PC-3 (cell line): ENCODE measurements at regions of chr3 and their contacts with region 1.

Region 1: DNA sequence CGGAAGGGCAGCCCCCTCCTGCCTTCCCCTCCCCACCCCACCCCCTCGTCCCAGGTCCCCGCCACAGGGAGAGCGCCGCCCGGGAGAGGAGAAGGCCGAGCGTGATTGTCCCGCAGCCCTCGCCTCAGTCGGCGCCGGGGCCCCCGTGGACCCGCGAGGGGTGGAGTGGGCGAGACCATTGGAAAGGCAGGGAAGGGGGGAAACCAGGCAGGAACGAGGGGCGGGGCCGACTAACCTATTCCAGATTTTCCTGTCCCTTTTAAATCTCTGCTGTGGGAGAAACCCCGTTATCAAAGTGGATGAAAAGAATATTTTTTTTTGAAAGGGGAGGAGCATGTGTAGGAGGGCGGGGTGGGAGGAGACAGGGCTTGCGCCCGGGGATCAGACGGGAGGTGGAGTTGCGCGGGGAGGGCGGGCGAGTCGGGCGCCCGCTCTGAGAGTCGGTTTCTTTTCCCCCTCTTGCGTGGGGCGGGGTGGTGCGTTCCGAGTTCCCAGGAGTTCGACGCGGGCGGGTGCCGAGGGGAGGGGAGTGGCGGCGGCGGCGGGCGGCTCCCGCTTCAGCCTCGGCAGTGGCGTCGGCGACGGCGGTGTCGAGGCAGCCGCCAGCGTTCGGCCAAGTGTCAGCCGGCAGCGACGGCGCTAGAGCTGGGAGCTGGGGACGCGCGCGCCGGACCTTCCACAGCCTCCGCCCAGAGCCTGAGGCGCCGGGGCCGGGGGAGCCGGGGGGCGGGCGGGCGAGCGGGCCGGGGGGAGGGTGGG is at the start of gene NECTIN3:
- DNase-seq: peak; percentile 96
- ATAC-seq: peak; percentile 78
- H3K4me3 ChIP-seq: peak within 1 kb of the TSS; percentile 99
- H3K27ac ChIP-seq: peak within 1 kb of the TSS; percentile 52
- H3K4me1 ChIP-seq: peaks cover 16% of the 10 kb centered on the region
- H3K27me3 ChIP-seq: no peaks in the 10 kb centered on the region
- CTCF ChIP-seq: no peak
- total RNA-seq, gene NECTIN3: 12.8 and 15.8 TPM in 2 replicates

Region 2: GRCh38 chr3:109806929-109807328 is 1264.5 kb before region 1 on chr3:
- CTCF ChIA-PET with region 1: no interaction called
- POLR2A ChIA-PET with region 1: no interaction called
- intact Hi-C with region 1: loop called (anchors 10 kb)
- DNase-seq: peak; percentile 77
- ATAC-seq: peak; percentile 85
- H3K4me3 ChIP-seq: no peak overlapping the region
- H3K27ac ChIP-seq: peak overlapping the region; percentile 31
- H3K4me1 ChIP-seq: peaks cover 13% of the 10 kb centered on the region
- H3K27me3 ChIP-seq: no peaks in the 10 kb centered on the region
- CTCF ChIP-seq: no peak

Region 3: DNA sequence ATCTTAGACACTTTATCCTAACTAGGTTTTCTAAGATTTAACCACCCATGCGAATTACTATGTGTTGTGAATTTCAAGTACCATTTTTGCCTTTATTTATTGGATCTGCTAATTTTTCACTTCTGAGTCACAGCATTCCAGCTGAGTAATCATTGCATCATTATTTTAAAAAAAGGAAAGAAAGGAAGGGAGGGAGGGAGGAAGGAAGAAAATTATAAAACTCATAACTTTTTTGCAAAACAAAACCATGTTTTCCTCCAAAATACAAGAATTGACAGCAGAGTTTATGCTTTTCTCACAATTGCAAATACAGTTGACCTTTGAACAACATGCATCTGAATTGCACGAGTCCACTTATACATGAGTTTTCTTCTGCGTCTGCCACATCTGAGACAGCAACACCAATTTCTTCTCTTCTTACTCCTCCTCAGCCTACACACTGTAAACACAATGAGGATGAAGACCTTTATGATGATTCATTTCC is 651.2 kb before region 1 on chr3:
- CTCF ChIA-PET with region 1: no interaction called
- POLR2A ChIA-PET with region 1: no interaction called
- intact Hi-C with region 1: loop called (anchors 1 kb)
- DNase-seq: peak; percentile 94
- ATAC-seq: peak; percentile 93
- H3K4me3 ChIP-seq: peak overlapping the region; percentile 58
- H3K27ac ChIP-seq: peak overlapping the region; percentile 74
- H3K4me1 ChIP-seq: peaks cover 31% of the 10 kb centered on the region
- H3K27me3 ChIP-seq: no peaks in the 10 kb centered on the region
- CTCF ChIP-seq: no peak

Region 4: GRCh38 chr3:110576962-110577361 is 494.5 kb before region 1 on chr3:
- CTCF ChIA-PET with region 1: no interaction called
- POLR2A ChIA-PET with region 1: no interaction called
- intact Hi-C with region 1: loop called (anchors 5 kb)
- DNase-seq: peak; percentile 95
- ATAC-seq: peak; percentile 94
- H3K4me3 ChIP-seq: no peak overlapping the region
- H3K27ac ChIP-seq: peak overlapping the region; percentile 52
- H3K4me1 ChIP-seq: peaks cover 29% of the 10 kb centered on the region
- H3K27me3 ChIP-seq: no peaks in the 10 kb centered on the region
- CTCF ChIP-seq: no peak

Region 5: DNA sequence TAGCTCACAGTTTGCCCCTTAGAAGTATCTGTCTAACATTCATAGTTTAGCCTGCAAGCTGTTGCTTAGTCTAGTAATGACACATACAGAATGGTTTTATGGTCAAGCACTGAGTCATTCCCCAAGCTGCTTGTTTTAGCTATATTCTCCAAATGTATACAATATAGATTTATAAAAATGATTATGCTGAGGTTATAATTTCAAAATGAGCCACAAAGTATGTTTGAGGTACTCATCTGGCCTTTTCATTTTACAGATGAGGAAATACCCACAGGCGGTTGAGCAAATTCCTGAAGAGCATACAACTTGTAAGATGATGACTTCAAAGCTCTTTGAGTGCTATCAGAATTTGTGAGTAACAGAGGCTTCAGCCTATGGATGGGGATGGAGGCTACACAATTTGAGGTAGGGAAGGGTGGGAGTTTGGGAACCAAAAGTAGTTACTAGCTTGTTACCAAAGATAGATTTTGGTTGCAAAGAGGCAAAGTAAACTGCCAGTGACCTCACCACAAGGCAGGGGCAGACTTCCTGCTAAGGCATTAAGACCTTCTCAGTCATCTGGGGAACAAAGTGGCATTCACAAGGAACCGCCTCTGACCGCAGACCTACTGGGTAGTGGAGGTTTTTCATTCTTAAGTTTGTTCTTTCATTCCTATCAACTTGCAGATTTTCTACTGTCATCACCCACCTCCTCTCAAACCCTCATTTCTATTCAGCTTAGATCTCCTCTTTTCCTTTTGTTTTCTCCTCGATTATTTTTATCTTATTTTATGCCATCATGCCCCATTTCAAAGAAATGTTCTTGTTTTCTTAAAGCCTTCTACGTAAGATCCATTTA is 257.0 kb before region 1 on chr3:
- CTCF ChIA-PET with region 1: no interaction called
- POLR2A ChIA-PET with region 1: no interaction called
- intact Hi-C with region 1: loop called (anchors 2 kb)
- DNase-seq: peak; percentile 92
- ATAC-seq: peak; percentile 93
- H3K4me3 ChIP-seq: peak overlapping the region; percentile 4; the same call in 1 of the 2 replicates
- H3K27ac ChIP-seq: peak overlapping the region; percentile 94
- H3K4me1 ChIP-seq: peaks cover 53% of the 10 kb centered on the region
- H3K27me3 ChIP-seq: no peaks in the 10 kb centered on the region
- CTCF ChIP-seq: no peak

Region 6: DNA sequence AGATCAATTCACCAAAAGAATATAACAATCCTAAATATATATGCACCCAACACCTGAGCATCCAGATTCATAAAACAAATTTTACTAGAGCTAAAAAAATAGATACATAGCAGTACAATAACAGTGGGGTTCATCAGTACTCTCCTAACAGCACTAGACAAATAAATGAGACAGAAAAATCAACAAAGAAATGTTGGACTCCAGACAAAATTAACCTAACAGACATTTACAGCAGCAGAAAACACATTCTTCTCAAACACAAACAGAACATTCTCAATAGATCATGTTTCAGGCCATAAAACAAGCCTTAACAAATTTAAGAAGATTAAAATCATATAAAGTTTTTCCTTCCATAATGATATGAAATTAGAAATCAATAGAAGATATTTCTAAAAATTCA is 124.6 kb before region 1 on chr3:
- CTCF ChIA-PET with region 1: no interaction called
- POLR2A ChIA-PET with region 1: no interaction called
- intact Hi-C with region 1: loop called (anchors 5 kb)
- DNase-seq: no peak
- ATAC-seq: peak; percentile 81
- H3K4me3 ChIP-seq: no peak overlapping the region
- H3K27ac ChIP-seq: no peak overlapping the region
- H3K4me1 ChIP-seq: no peaks in the 10 kb centered on the region
- H3K27me3 ChIP-seq: no peaks in the 10 kb centered on the region
- CTCF ChIP-seq: no peak

Region 7: GRCh38 chr3:111315925-111316587 is 244.6 kb after region 1 on chr3:
- CTCF ChIA-PET with region 1: no interaction called
- POLR2A ChIA-PET with region 1: no interaction called
- intact Hi-C with region 1: no loop called
- DNase-seq: peak; percentile 60
- ATAC-seq: peak; percentile 44; the same call in 1 of the 2 replicates
- H3K4me3 ChIP-seq: no peak overlapping the region
- H3K27ac ChIP-seq: no peak overlapping the region
- H3K4me1 ChIP-seq: 0 out of 2 replicates have a peak, but pooled peaks cover 12% of the 10 kb centered on the region
- H3K27me3 ChIP-seq: no peaks in the 10 kb centered on the region
- CTCF ChIP-seq: no peak

Region 8: GRCh38 chr3:111338059-111338698 is 266.7 kb after region 1 on chr3:
- CTCF ChIA-PET with region 1: no interaction called
- POLR2A ChIA-PET with region 1: no interaction called
- intact Hi-C with region 1: loop called (anchors 1 kb)
- DNase-seq: peak; percentile 92
- ATAC-seq: peak; percentile 89
- H3K4me3 ChIP-seq: no peak overlapping the region
- H3K27ac ChIP-seq: no peak overlapping the region
- H3K4me1 ChIP-seq: peaks cover 19% of the 10 kb centered on the region
- H3K27me3 ChIP-seq: no peaks in the 10 kb centered on the region
- CTCF ChIP-seq: peak; percentile 98

Region 9: GRCh38 chr3:111465081-111465670 is 393.7 kb after region 1 on chr3:
- CTCF ChIA-PET with region 1: no interaction called
- POLR2A ChIA-PET with region 1: no interaction called
- intact Hi-C with region 1: no loop called
- DNase-seq: no peak
- ATAC-seq: no peak
- H3K4me3 ChIP-seq: no peak overlapping the region
- H3K27ac ChIP-seq: no peak overlapping the region
- H3K4me1 ChIP-seq: no peaks in the 10 kb centered on the region
- H3K27me3 ChIP-seq: peaks cover 17% of the 10 kb centered on the region; the same call in 1 of the 2 replicates
- CTCF ChIP-seq: no peak